ENCODE measurements at regions of chrX and their contacts with region 1.

Region 1: DNA sequence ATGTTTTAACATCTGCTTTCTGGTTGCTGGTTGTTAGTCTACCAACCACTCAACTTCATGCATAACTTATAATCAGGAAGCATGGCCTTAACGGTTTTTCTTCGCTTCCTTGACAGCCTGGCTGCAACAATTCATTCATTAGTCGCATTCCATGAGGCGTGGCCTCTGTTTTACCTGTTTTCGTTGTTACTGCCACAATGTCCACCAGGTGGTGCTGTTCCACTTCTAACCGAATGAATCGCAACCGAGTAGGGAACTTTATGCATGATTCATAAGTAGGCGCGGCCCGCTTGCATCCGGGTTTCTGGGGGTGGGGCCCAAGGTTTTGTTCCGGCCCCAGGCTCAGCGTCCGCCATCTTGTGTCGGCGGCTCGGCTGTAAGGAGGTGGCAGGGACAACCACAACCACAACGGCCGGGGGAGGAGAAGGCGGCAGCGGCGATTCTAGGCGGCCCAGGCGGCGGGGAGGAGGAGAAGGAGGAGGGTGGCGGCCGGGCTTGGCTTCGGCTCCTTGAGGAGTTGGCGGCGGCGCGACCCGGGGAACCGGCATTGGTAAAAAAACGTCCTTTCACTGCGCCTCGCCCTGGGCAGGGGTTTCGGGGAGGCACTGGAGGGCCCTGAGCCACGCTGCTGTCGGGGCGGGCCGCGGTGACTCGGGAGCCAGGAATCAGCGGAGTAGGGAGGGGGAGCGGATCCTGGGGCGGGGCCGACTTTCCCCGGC is at the start of gene UBA1:
- DNase-seq: peak; percentile 98
- total RNA-seq, gene UBA1: 160 TPM

Region 2: DNA sequence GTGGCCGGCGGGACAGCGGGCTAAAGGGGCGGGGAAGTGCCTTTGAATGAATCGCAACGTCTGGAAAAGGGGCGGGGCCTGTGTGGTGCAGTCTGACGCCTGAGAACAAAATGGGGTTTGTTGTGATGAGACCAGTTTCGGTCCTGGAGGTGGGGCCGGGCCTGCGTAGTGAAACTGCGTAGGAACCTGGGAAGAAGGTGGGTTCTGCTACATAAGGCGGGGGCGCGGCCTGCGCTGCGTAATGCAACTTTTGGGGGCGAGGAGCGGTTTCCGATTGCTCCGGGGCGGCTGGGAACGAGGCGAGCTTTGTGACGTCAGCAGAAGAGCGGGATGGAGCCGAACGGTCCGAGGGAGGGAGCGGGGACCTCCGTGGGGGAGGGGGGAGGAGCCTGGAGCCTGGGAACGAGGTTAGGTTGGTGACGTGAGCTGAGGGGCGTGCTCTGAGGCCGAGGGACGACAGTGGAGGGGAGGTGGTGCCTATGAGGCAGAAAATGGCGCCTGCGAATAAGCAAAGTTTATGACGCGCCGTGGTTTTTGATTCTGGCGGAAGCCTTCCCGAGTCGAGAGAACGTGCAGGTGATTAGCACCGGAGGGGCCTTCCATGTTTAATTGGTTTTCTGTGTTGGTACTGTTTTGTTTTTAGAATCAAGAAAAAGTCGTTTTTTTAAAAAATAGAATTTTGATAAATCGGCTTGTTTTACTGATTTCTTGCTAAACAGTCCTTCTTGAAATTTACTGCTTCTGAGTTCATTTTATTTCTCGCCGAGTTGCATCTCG is 39.9 kb after region 1 on chrX:
- intact Hi-C with region 1: no loop called
- DNase-seq: peak; percentile 96

Region 3: GRCh38 chrX:47384502-47384901 is 190.9 kb after region 1 on chrX:
- intact Hi-C with region 1: loop called (anchors 1 kb)
- DNase-seq: peak; percentile 76

Region 4: DNA sequence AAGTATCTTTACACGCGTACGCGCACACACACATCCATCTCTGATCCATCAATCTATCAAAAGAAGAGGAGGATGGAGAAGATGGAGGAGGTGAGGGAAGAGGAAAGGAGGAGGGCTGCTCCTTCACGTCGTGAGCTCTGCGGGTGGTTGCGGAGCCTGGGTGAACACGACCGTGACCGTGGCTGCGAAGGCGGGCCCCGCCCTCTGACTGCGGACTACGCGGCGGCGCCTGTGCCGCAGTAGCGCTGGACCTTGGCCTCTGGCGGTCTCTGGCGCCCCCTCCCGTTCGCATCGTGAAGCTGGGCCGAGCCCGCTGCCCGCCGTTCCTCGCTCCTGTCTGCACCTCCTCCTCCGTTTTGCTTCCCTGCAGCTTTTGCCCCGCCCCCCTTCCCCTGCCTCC is 329.7 kb after region 1 on chrX:
- intact Hi-C with region 1: loop called (anchors 1 kb)
- DNase-seq: peak; percentile 93

Region 5: GRCh38 chrX:48021026-48021900 is 827.6 kb after region 1 on chrX:
- intact Hi-C with region 1: loop called (anchors 10 kb)
- DNase-seq: peak; percentile 86

Measured in cardiac septum (tissue), 1 donor.